ENCODE measurements at regions of chr11 and their contacts with region 1.

Region 1: GRCh38 chr11:102390667-102391465 is 43.9 kb downstream of the BIRC2 start:
- DNase-seq: peak; percentile 73
- ATAC-seq: peak; percentile 83
- H3K4me3 Mint-ChIP-seq: no peak overlapping the region
- H3K27ac Mint-ChIP-seq: peak overlapping the region; percentile 48
- H3K4me1 Mint-ChIP-seq: peaks cover 16% of the 10 kb centered on the region
- H3K27me3 Mint-ChIP-seq: no peaks in the 10 kb centered on the region

Region 2: GRCh38 chr11:102287964-102288724 is 102.7 kb before region 1 on chr11:
- CTCF ChIA-PET with region 1: interaction called, 17 read pairs
- DNase-seq: peak; percentile 51
- ATAC-seq: peak; percentile 89
- H3K4me3 Mint-ChIP-seq: peak overlapping the region; percentile 34
- H3K27ac Mint-ChIP-seq: no peak overlapping the region
- H3K4me1 Mint-ChIP-seq: peaks cover 26% of the 10 kb centered on the region
- H3K27me3 Mint-ChIP-seq: no peaks in the 10 kb centered on the region

Region 3: DNA sequence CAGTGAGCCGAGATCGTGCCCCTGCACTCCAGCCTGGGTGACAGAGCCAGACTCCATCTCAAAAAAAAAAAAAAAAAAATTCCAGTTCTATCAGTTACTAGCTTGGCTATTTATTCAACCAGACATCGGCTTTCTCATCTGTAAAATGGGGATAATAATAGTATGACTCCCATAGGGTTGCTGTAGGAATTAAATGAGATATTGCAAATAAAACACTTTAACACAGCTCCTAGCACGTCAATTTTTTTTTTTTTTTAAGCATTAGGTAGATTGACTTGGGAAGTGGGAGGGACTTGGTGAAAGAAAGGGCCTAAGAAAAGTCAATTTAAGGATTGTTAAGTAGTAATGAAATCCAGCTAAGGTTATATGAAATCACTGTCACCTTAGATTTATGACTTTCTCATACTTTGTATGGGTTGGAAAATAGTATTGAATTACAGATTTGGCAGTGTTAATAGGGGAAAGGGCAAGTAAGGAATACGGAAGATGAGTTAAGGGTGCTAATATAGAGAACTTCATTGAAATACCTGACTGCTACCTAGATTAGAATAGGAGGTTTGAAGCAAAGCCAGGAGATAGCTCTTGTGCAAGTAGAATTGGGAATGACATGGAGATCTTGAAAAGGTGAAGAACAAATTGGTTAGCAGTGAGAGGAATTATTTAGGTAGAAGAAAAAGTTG is 15.0 kb before region 1 on chr11:
- CTCF ChIA-PET with region 1: interaction called, 16 read pairs
- DNase-seq: no peak
- ATAC-seq: no peak
- H3K4me3 Mint-ChIP-seq: no peak overlapping the region
- H3K27ac Mint-ChIP-seq: peak overlapping the region; percentile 29
- H3K4me1 Mint-ChIP-seq: peaks cover 7% of the 10 kb centered on the region
- H3K27me3 Mint-ChIP-seq: no peaks in the 10 kb centered on the region

Region 4: GRCh38 chr11:102476812-102477211 is 85.9 kb after region 1 on chr11:
- CTCF ChIA-PET with region 1: interaction called, 19 read pairs
- DNase-seq: peak; percentile 71
- ATAC-seq: peak; percentile 98
- H3K4me3 Mint-ChIP-seq: no peak overlapping the region
- H3K27ac Mint-ChIP-seq: peak overlapping the region; percentile 84
- H3K4me1 Mint-ChIP-seq: peaks cover 27% of the 10 kb centered on the region
- H3K27me3 Mint-ChIP-seq: no peaks in the 10 kb centered on the region

Region 5: GRCh38 chr11:102495161-102496042 is 104.5 kb after region 1 on chr11:
- CTCF ChIA-PET with region 1: interaction called, 39 read pairs
- DNase-seq: peak; percentile 45
- ATAC-seq: peak; percentile 78
- H3K4me3 Mint-ChIP-seq: peak overlapping the region; percentile 15
- H3K27ac Mint-ChIP-seq: peak overlapping the region; percentile 39
- H3K4me1 Mint-ChIP-seq: peaks cover 16% of the 10 kb centered on the region
- H3K27me3 Mint-ChIP-seq: peaks cover 22% of the 10 kb centered on the region

Region 6: DNA sequence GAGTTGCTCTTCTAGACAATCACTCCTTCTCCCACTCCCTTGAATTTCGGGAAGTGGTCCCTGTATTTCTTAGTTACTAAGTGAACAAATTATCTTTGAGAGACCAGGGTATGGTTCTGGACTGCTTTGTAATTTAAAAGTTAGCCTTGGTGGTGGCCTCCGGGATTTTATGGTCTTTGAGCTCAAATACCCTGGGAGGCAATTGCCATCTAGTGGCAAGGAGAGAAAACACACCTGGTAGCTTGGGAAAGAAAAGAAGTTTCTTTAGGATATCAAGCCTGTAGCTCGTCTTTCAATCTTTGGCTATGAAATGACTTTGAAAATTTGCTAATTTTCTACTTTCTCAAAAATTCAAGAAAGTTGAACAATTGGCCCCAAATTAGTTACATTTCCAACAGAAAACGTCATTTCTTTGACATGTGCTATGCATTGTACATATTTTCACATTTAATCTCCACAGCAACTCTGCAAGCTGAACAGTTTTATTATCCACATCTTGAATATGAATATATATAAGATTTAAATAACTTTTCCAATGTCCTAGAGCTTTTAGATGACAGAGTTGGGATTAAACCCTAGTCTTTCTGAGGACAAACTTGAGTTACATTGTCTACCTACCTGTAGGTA is 275.6 kb after region 1 on chr11:
- CTCF ChIA-PET with region 1: interaction called, 19 read pairs
- DNase-seq: no peak
- ATAC-seq: peak; percentile 49
- H3K4me3 Mint-ChIP-seq: no peak overlapping the region
- H3K27ac Mint-ChIP-seq: no peak overlapping the region
- H3K4me1 Mint-ChIP-seq: no peaks in the 10 kb centered on the region
- H3K27me3 Mint-ChIP-seq: peaks cover 2% of the 10 kb centered on the region

Measured in activated CD8-positive, alpha-beta memory T cell treated with anti-CD3 and anti-CD28 coated beads, Interleukin-2, amount 10 ng/mL, durations not matched to agents 7 days and 5 days (primary cell).